Dendritic cell treated with granulocyte-macrophage colony-stimulating factor and Interleukin-4, amounts not matched to agents 40 ng/mL and 50 ng/mL, for 4 days (primary cell): ENCODE measurements at regions of chr14 and their contacts with region 1.

Region 1: GRCh38 chr14:58107947-58108552 is 44.0 kb downstream of the ARMH4 start:
- H3K4me3 Mint-ChIP-seq: no peak overlapping the region
- H3K27ac Mint-ChIP-seq: no peak overlapping the region
- H3K4me1 Mint-ChIP-seq: no peaks in the 10 kb centered on the region
- H3K27me3 Mint-ChIP-seq: peaks cover 3% of the 10 kb centered on the region

Region 2: GRCh38 chr14:58166005-58166983 is 58.2 kb after region 1 on chr14:
- intact Hi-C with region 1: loop called (anchors 1 kb)
- H3K4me3 Mint-ChIP-seq: no peak overlapping the region
- H3K27ac Mint-ChIP-seq: no peak overlapping the region
- H3K4me1 Mint-ChIP-seq: peaks cover 8% of the 10 kb centered on the region
- H3K27me3 Mint-ChIP-seq: peaks cover 4% of the 10 kb centered on the region